ENCODE measurements at regions of chr1 and their contacts with region 1.

Region 1: DNA sequence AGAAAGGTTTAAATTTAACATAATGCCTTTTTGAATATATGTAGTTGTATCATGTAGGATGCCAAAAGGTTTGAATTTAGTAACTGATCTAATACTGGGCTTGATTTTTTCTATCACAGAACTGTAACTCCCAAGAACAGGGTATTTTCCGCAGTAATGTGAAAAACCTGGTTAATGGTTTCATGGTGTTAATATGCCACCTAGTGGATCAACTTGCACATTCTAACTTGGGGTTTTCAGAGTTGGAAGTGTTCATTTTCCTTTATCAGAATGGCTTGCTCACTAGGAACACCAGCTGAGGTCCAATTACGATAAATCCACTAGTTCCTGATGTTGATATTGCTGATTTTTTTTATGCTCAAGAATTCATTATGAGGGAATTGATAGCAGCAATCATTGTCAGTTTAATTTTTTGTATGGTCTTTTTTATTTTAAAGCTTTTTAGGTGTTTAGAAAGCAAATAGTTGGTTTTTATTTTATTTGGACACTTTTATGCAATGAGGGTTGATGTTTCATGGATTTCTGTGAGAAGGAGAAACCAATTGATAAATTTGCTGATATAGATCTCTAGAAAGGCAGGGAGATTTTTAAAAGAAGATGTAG is 157.2 kb downstream of the PLA2G4A start:
- DNase-seq: no peak
- ATAC-seq: peak; percentile 31
- H3K4me3 Mint-ChIP-seq: no peak overlapping the region
- H3K27ac Mint-ChIP-seq: no peak overlapping the region
- H3K4me1 Mint-ChIP-seq: no peaks in the 10 kb centered on the region
- H3K27me3 Mint-ChIP-seq: no peaks in the 10 kb centered on the region
- CTCF ChIP-seq: no peak

Region 2: DNA sequence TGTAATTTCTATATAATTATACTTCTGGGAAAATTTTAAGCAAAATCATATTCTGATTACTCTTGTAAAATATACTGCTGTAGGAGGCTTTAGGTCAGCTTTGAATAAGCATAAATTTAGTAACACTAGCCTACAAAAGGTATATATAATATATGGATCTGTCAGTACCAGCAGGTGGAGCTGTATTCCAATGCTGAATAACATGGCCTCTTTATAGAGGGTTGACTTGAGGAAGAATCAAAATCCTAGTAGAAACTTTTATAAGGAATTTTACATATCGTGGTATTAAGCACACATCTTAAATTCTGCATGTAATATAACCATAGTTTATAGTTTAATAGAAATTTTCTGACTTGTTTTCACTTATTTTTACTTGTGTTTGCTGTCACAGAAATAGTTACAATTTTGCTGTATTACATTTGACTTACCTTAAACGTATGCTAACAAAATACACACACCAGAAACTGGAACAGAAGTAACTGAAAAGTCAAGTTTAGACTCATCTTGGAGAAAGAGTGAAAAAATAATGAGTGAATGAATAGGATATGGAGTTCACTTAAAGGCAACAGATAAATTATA is 1172.5 kb before region 1 on chr1:
- CTCF ChIA-PET with region 1: no interaction called
- POLR2A ChIA-PET with region 1: no interaction called
- intact Hi-C with region 1: loop called (anchors 10 kb)
- DNase-seq: no peak
- ATAC-seq: no peak
- H3K4me3 Mint-ChIP-seq: no peak overlapping the region
- H3K27ac Mint-ChIP-seq: no peak overlapping the region
- H3K4me1 Mint-ChIP-seq: no peaks in the 10 kb centered on the region
- H3K27me3 Mint-ChIP-seq: no peaks in the 10 kb centered on the region
- CTCF ChIP-seq: no peak

Region 3: GRCh38 chr1:186304982-186305949 is 680.7 kb before region 1 on chr1:
- CTCF ChIA-PET with region 1: no interaction called
- POLR2A ChIA-PET with region 1: no interaction called
- intact Hi-C with region 1: loop called (anchors 1 kb)
- DNase-seq: no peak
- ATAC-seq: peak; percentile 34
- H3K4me3 Mint-ChIP-seq: no peak overlapping the region
- H3K27ac Mint-ChIP-seq: no peak overlapping the region
- H3K4me1 Mint-ChIP-seq: no peaks in the 10 kb centered on the region
- H3K27me3 Mint-ChIP-seq: no peaks in the 10 kb centered on the region
- CTCF ChIP-seq: no peak

Region 4: GRCh38 chr1:186482661-186483255 is 503.2 kb before region 1 on chr1:
- CTCF ChIA-PET with region 1: interaction called, 14 read pairs
- POLR2A ChIA-PET with region 1: no interaction called
- intact Hi-C with region 1: loop called (anchors 1 kb)
- DNase-seq: peak; percentile 26
- ATAC-seq: peak; percentile 21
- H3K4me3 Mint-ChIP-seq: no peak overlapping the region
- H3K27ac Mint-ChIP-seq: no peak overlapping the region
- H3K4me1 Mint-ChIP-seq: no peaks in the 10 kb centered on the region
- H3K27me3 Mint-ChIP-seq: no peaks in the 10 kb centered on the region
- CTCF ChIP-seq: no peak

Region 5: GRCh38 chr1:186605762-186606350 is 380.1 kb before region 1 on chr1:
- CTCF ChIA-PET with region 1: interaction called, 6 read pairs
- POLR2A ChIA-PET with region 1: no interaction called
- intact Hi-C with region 1: loop called (anchors 1 kb)
- DNase-seq: no peak
- ATAC-seq: no peak
- H3K4me3 Mint-ChIP-seq: no peak overlapping the region
- H3K27ac Mint-ChIP-seq: no peak overlapping the region
- H3K4me1 Mint-ChIP-seq: no peaks in the 10 kb centered on the region
- H3K27me3 Mint-ChIP-seq: peaks cover 2% of the 10 kb centered on the region
- CTCF ChIP-seq: no peak

Region 6: GRCh38 chr1:186722711-186723309 is 263.2 kb before region 1 on chr1:
- CTCF ChIA-PET with region 1: no interaction called
- POLR2A ChIA-PET with region 1: no interaction called
- intact Hi-C with region 1: loop called (anchors 10 kb)
- DNase-seq: no peak
- ATAC-seq: no peak
- H3K4me3 Mint-ChIP-seq: no peak overlapping the region
- H3K27ac Mint-ChIP-seq: no peak overlapping the region
- H3K4me1 Mint-ChIP-seq: no peaks in the 10 kb centered on the region
- H3K27me3 Mint-ChIP-seq: no peaks in the 10 kb centered on the region
- CTCF ChIP-seq: no peak

Region 7: DNA sequence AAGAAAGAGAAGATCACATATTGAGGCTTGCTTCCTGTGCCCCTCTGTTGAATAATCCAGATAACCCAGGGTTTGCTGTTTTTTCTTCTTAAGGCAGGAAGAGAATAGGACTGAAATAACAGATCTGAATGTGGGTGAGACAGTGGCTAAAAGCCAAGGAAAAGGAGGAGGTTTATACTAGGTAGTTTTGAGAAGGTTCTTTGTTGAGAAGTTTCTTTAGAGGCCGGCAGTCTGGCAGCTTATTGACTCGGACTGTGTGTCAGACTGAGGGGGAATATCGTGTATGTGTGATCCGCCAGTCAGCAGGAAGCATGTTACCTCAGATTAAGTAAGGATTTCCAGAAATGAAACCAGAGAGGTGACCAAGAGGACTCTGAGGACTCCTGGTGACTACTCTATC is 37.5 kb before region 1 on chr1:
- CTCF ChIA-PET with region 1: no interaction called
- POLR2A ChIA-PET with region 1: no interaction called
- intact Hi-C with region 1: no loop called
- DNase-seq: no peak
- ATAC-seq: no peak
- H3K4me3 Mint-ChIP-seq: no peak overlapping the region
- H3K27ac Mint-ChIP-seq: no peak overlapping the region
- H3K4me1 Mint-ChIP-seq: no peaks in the 10 kb centered on the region
- H3K27me3 Mint-ChIP-seq: no peaks in the 10 kb centered on the region
- CTCF ChIP-seq: no peak

Measured in activated B cell treated with CpG ODN at 0.5 μM for 24 hours (primary cell).